ENCODE measurements at regions of chr3 and their contacts with region 1.

Region 1: GRCh38 chr3:4290272-4290893 is 12.8 kb upstream of the SETMAR start:
- DNase-seq: peak; percentile 58
- H3K4me3 Mint-ChIP-seq: no peak overlapping the region
- H3K27ac Mint-ChIP-seq: no peak overlapping the region
- H3K4me1 Mint-ChIP-seq: no peaks in the 10 kb centered on the region
- H3K27me3 Mint-ChIP-seq: peaks cover 7% of the 10 kb centered on the region
- CTCF ChIP-seq: peak; percentile 77

Region 2: DNA sequence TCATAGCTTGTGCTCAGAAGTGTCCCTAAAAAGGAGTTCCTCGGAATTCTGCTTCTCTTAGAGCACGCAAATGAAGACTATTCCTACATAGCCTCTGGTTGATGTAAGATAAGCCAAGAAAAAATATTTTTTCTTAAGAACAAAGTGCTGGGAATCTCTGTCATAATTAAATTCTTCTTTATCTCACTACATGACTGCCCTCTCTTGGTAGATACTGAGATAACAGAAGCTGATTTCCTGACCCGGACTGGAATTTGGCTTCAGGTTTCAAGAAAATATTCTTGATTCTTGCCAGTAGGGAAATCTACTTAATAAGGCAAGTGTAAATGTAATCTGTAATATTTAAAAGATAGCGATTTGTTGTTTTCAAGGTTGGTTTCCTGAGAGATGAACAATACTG is 18.5 kb before region 1 on chr3:
- CTCF ChIA-PET with region 1: interaction called, 21 read pairs
- POLR2A ChIA-PET with region 1: interaction called, 3 read pairs
- intact Hi-C with region 1: no loop called
- DNase-seq: peak; percentile 42
- H3K4me3 Mint-ChIP-seq: no peak overlapping the region
- H3K27ac Mint-ChIP-seq: no peak overlapping the region
- H3K4me1 Mint-ChIP-seq: no peaks in the 10 kb centered on the region
- H3K27me3 Mint-ChIP-seq: peaks cover 1% of the 10 kb centered on the region
- CTCF ChIP-seq: peak; percentile 53

Region 3: DNA sequence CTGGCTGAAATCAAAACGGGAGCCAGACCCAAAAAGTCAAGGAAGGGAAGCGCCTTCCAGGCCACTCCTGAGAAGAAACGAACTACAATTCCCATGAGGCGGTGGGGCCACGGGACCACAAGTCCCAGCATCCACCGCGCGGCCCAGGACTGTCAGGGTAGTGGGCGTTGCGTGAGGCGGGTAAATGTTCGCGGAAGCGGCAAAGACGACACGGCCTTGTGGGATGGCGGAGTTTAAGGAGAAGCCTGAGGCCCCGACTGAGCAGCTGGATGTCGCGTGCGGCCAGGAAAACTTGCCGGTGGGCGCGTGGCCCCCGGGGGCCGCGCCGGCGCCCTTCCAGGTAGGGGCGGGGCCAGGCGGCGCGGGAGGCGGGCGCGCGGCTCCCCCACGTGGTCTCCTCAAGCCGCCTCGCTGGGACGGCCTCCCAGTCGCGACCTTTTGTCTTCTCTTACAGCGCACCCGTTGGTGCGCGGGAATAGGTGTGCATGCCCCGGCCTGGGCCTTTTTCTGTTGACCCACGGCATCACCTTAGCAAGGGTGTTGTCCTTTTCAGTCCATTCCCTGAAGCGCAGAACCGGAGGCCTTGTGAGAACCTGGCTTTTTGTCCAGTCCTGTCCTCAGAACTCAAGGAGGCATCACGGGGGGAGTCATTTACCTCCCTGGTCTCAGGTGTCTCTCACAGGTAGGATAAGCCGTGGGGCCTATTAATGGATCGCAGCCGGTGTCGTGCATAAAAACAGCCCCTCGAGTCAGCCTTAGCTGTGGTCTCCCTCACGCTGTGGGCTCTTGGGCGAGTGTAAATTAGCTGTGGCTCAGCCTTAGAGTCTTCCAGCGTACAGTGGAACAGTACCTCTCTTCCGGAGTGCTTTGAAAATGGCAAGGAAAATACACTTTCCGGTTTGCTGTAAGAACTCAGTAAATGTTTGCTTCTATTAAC is 13.1 kb after region 1 on chr3 and contains the start of gene SETMAR:
- CTCF ChIA-PET with region 1: interaction called, 11 read pairs
- POLR2A ChIA-PET with region 1: no interaction called
- intact Hi-C with region 1: no loop called
- DNase-seq: peak; percentile 90
- H3K4me3 Mint-ChIP-seq: peak within 1 kb of the TSS; percentile 91
- H3K27ac Mint-ChIP-seq: peak within 1 kb of the TSS; percentile 88
- H3K4me1 Mint-ChIP-seq: peaks cover 10% of the 10 kb centered on the region
- H3K27me3 Mint-ChIP-seq: no peaks in the 10 kb centered on the region
- CTCF ChIP-seq: no peak
- total RNA-seq, gene SETMAR: 5.1 and 8.3 TPM in 2 replicates

Region 4: DNA sequence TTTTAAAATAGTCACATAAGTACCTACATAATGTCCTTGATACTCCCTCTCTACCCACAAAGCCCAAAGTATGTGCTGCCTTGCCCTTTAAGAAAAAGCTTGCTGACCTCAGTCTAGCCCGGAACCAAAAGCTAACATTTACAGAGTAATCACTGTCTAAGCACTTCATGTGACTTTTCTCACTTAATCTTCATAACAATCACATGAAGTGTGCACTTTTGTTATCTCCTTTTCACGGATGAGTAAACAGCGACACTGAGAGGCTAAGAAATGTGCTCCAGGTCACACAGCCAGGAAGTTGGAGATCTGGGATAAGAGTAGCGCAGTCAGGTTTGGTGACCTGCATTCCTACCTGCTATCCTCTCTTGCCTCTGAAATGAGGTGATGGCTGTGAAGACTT is 396.8 kb after region 1 on chr3:
- CTCF ChIA-PET with region 1: no interaction called
- POLR2A ChIA-PET with region 1: no interaction called
- intact Hi-C with region 1: no loop called
- DNase-seq: no peak
- H3K4me3 Mint-ChIP-seq: no peak overlapping the region
- H3K27ac Mint-ChIP-seq: no peak overlapping the region
- H3K4me1 Mint-ChIP-seq: peaks cover 4% of the 10 kb centered on the region
- H3K27me3 Mint-ChIP-seq: no peaks in the 10 kb centered on the region
- CTCF ChIP-seq: no peak